HCT116 (cell line): ENCODE measurements at regions of chr22 and their contacts with region 1.

Region 1: DNA sequence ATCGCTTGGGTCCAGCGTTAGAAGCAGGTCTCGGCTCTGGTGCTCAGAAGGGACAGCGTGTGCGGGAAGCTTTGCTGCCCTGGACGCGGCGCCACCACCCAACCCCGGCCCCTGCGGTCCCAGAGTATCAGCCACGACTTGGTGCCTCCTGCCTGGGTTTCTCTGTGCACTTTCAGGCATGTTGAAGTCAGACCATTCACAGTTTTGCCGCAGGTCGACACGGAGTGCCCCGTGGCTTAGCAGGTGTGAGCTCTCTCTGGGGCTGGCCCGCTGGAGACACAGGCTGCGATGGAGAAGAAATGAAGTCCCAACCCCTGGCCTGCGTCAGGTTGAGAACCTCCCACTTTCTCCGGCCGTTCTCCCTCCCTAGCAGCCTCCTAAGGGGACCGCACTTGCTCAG is 494.5 kb downstream of the BRD1 start:
- DNase-seq: no peak
- ATAC-seq: no peak
- H3K4me3 ChIP-seq: no peak overlapping the region
- H3K27ac ChIP-seq: no peak overlapping the region
- H3K4me1 ChIP-seq: no peaks in the 10 kb centered on the region
- H3K27me3 ChIP-seq: peaks cover 21% of the 10 kb centered on the region; the same call in 1 of the 2 replicates
- CTCF ChIP-seq: no peak
- POLR2A ChIP-seq: no peak
- RAD21 ChIP-seq: no peak

Region 2: DNA sequence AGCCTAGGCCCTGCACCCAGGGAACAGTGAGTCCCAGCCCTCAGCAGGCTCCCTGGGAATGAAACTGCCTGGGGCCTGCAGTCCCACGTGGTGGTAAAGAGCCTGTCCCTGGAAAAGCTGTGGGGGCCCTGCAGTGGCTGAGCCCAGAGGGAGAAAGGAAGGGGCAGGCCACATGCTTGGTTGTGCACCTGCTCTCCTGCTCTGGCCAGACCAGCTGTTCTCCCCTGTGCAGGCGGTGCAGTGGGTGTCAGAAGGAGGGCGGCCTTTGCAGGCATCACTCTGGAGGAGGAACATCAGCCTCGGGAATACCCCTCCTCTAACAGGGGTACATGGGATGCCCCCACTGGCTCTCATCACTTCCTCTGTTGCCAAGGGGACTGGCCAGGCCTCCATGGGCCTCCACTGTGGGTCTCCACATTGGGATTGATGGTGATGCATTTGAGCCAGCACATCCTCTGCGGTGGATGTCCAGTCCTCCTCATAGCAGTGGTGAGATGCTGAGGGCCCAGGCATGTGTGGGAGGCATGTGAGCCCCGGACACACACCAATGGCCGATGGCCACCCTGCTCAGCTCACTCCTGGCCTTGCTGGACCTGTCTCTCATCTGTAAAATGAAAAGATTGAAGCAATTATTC is 195.9 kb before region 1 on chr22:
- CTCF ChIA-PET with region 1: no interaction called
- POLR2A ChIA-PET with region 1: no interaction called
- RAD21 ChIA-PET with region 1: no interaction called
- intact Hi-C with region 1: no loop called
- DNase-seq: no peak
- ATAC-seq: no peak
- H3K4me3 ChIP-seq: no peak overlapping the region
- H3K27ac ChIP-seq: no peak overlapping the region
- H3K4me1 ChIP-seq: no peaks in the 10 kb centered on the region
- H3K27me3 ChIP-seq: peaks cover 61% of the 10 kb centered on the region
- CTCF ChIP-seq: no peak
- POLR2A ChIP-seq: no peak
- RAD21 ChIP-seq: no peak

Region 3: GRCh38 chr22:49413551-49413950 is 80.3 kb after region 1 on chr22:
- CTCF ChIA-PET with region 1: no interaction called
- POLR2A ChIA-PET with region 1: no interaction called
- RAD21 ChIA-PET with region 1: no interaction called
- intact Hi-C with region 1: loop called (anchors 2 kb)
- DNase-seq: no peak
- ATAC-seq: no peak
- H3K4me3 ChIP-seq: no peak overlapping the region
- H3K27ac ChIP-seq: no peak overlapping the region
- H3K4me1 ChIP-seq: no peaks in the 10 kb centered on the region
- H3K27me3 ChIP-seq: peaks cover 14% of the 10 kb centered on the region
- CTCF ChIP-seq: no peak
- POLR2A ChIP-seq: no peak
- RAD21 ChIP-seq: no peak

Region 4: GRCh38 chr22:49567899-49568750 is 234.9 kb after region 1 on chr22:
- CTCF ChIA-PET with region 1: no interaction called
- POLR2A ChIA-PET with region 1: no interaction called
- RAD21 ChIA-PET with region 1: no interaction called
- intact Hi-C with region 1: no loop called
- DNase-seq: no peak
- ATAC-seq: no peak
- H3K4me3 ChIP-seq: no peak overlapping the region
- H3K27ac ChIP-seq: no peak overlapping the region
- H3K4me1 ChIP-seq: no peaks in the 10 kb centered on the region
- H3K27me3 ChIP-seq: no peaks in the 10 kb centered on the region; the same call in 1 of the 2 replicates
- CTCF ChIP-seq: no peak
- POLR2A ChIP-seq: no peak
- RAD21 ChIP-seq: no peak